Caco-2 (cell line): ENCODE measurements at regions of chr6 and their contacts with region 1.

Region 1: GRCh38 chr6:169041078-169041477 is 212.6 kb downstream of the THBS2 start:
- DNase-seq: no peak
- H3K4me3 ChIP-seq: no peak overlapping the region
- H3K4me3 Mint-ChIP-seq: no peak overlapping the region
- H3K27ac Mint-ChIP-seq: no peak overlapping the region
- H3K4me1 ChIP-seq: no peaks in the 10 kb centered on the region
- H3K4me1 Mint-ChIP-seq: no peaks in the 10 kb centered on the region
- H3K27me3 ChIP-seq: no peaks in the 10 kb centered on the region
- H3K27me3 Mint-ChIP-seq: peaks cover 7% of the 10 kb centered on the region
- CTCF ChIP-seq: no peak

Region 2: GRCh38 chr6:169095153-169095552 is 54.1 kb after region 1 on chr6:
- CTCF ChIA-PET with region 1: no interaction called
- POLR2A ChIA-PET with region 1: no interaction called
- intact Hi-C with region 1: loop called (anchors 2 kb)
- DNase-seq: no peak
- H3K4me3 ChIP-seq: no peak overlapping the region
- H3K4me3 Mint-ChIP-seq: no peak overlapping the region
- H3K27ac Mint-ChIP-seq: no peak overlapping the region
- H3K4me1 ChIP-seq: no peaks in the 10 kb centered on the region
- H3K4me1 Mint-ChIP-seq: no peaks in the 10 kb centered on the region
- H3K27me3 ChIP-seq: no peaks in the 10 kb centered on the region; the same call in 1 of the 2 replicates
- H3K27me3 Mint-ChIP-seq: no peaks in the 10 kb centered on the region
- CTCF ChIP-seq: no peak